B cell (primary cell): ENCODE measurements at regions of chr15 and their contacts with region 1.

Region 1: GRCh38 chr15:60355148-60355857 is 42.5 kb downstream of the ANXA2 start:
- DNase-seq: no peak
- ATAC-seq: no peak
- H3K4me3 ChIP-seq: no peak overlapping the region
- H3K4me3 Mint-ChIP-seq: no peak overlapping the region
- H3K27ac ChIP-seq: no peak overlapping the region
- H3K27ac Mint-ChIP-seq: no peak overlapping the region
- H3K4me1 ChIP-seq: no peaks in the 10 kb centered on the region
- H3K4me1 Mint-ChIP-seq: no peaks in the 10 kb centered on the region
- H3K27me3 ChIP-seq: no peaks in the 10 kb centered on the region
- H3K27me3 Mint-ChIP-seq: no peaks in the 10 kb centered on the region
- CTCF ChIP-seq: no peak

Region 2: DNA sequence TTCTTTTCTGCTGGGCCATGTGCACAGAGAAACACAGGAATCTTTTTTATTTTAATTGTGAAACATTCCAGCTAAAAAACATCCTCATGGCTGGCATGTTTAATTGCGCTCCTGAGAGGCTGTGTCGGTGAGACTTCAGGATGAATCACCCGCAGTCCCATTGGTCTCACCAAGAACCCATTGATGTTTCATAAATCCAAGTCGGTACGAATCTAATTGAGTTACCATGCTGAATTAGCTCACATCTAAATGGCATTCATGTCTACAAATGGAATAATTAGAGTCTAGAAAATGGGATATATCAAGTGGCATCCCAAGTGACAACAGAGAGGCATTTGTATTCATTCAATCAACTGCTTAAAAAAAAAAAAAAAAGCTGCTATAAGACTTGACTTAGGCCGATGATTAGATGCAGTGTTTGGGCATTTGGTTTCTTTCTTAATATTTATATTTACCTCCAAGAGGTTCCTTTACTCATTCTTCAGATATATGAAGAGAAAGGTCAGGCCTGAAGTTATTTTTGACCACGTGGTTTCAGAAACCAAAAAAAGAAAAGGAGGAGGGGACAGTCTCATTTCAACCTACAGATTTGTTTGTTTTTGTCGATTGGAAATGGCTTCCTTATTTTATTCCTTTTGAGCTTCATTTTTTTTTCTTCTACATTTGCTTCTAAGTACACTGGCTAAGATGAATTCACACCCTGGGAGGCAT is 430.3 kb before region 1 on chr15:
- CTCF ChIA-PET with region 1: no interaction called
- POLR2A ChIA-PET with region 1: no interaction called
- intact Hi-C with region 1: no loop called
- DNase-seq: no peak
- ATAC-seq: no peak
- H3K4me3 ChIP-seq: no peak overlapping the region
- H3K4me3 Mint-ChIP-seq: no peak overlapping the region
- H3K27ac ChIP-seq: no peak overlapping the region
- H3K27ac Mint-ChIP-seq: no peak overlapping the region
- H3K4me1 ChIP-seq: no peaks in the 10 kb centered on the region
- H3K4me1 Mint-ChIP-seq: no peaks in the 10 kb centered on the region
- H3K27me3 ChIP-seq: no peaks in the 10 kb centered on the region
- H3K27me3 Mint-ChIP-seq: peaks cover 22% of the 10 kb centered on the region
- CTCF ChIP-seq: no peak

Region 3: GRCh38 chr15:60272625-60273024 is 82.7 kb before region 1 on chr15:
- CTCF ChIA-PET with region 1: no interaction called
- POLR2A ChIA-PET with region 1: interaction called, 17 read pairs
- intact Hi-C with region 1: no loop called
- DNase-seq: no peak
- ATAC-seq: no peak
- H3K4me3 ChIP-seq: no peak overlapping the region
- H3K4me3 Mint-ChIP-seq: no peak overlapping the region
- H3K27ac ChIP-seq: no peak overlapping the region
- H3K27ac Mint-ChIP-seq: no peak overlapping the region
- H3K4me1 ChIP-seq: no peaks in the 10 kb centered on the region
- H3K4me1 Mint-ChIP-seq: no peaks in the 10 kb centered on the region
- H3K27me3 ChIP-seq: peaks cover 0 to 10% (median 3%) of the 10 kb centered on the region in 4 experiments
- H3K27me3 Mint-ChIP-seq: peaks cover 29% of the 10 kb centered on the region
- CTCF ChIP-seq: no peak